ENCODE measurements at regions of chr3 and their contacts with region 1.

Region 1: DNA sequence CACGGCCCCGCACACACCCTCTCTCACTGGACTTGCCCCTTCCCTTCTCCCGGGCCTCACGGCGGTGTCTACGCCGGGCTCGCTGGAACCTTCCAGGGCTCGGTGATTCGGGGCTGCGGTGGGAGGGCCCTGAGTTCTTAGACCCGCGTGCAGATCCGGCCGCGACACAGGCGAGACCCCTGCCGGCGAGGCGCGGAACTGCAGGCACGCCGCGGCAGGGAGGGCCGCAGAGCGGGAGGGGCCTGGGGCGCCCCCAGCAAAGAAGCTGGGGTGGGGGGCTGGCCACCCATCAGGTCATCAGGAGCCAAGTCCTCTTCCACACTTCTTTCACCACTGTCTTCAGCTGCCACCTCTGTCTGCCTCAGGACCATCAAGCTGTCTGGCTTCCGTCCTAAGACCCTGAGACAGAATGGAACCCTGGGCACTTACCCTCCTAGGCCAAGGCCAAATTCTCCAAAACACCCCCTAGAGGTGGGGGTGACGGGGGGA is 164.5 kb downstream of the XXYLT1 start:
- DNase-seq: peak; percentile 85
- ATAC-seq: peak; percentile 98
- H3K4me3 ChIP-seq: peak overlapping the region in 3 of 5 experiments; percentile 13 to 40 (median 21)
- H3K4me3 Mint-ChIP-seq: peak overlapping the region; percentile 80
- H3K27ac ChIP-seq: no peak overlapping the region
- H3K27ac Mint-ChIP-seq: peak overlapping the region; percentile 79
- H3K4me1 ChIP-seq: peaks cover 15 to 24% of the 10 kb centered on the region in 2 donors
- H3K4me1 Mint-ChIP-seq: peaks cover 34% of the 10 kb centered on the region
- H3K27me3 ChIP-seq: no peaks in the 10 kb centered on the region
- H3K27me3 Mint-ChIP-seq: no peaks in the 10 kb centered on the region
- CTCF ChIP-seq: peak; percentile 97

Region 2: DNA sequence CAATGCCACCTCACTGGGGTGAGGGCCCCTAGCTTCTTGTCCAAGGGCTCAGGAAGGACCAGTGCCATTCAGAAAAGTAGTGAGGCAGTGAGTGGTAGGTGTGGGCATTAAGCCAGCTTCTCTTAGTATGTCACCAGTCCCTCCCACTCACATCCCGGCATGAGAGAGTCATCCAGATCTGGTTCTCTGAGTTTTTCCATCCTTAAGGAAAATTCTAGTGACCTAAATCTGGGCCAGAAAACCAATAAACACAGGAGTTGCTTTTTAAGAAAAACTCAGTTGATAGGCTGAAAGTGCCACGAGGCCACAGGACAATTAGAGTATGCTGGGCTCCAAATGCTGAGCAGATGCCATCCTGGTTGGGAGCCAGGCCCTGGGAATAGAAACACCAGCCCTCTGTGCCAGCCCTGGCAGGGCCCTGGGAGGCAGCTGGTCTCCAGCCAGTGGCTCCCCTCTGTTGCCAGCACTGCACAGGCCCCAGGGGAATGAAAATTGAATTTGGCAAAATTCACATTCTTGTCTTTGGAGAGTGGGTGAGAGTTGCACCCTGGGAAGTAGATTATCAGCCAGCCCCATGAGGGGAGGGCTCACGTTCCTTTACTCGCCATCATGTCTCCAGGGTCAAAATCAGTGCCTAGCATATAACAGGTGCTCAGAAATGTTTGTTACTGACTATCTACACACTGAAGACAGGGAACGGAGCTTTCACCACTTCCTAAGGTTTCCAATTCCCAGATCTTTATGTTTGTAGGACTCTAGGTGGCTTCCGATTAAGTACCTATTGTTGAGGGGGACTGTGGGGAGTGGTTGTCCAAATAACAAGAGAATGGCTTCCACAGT is 368.0 kb before region 1 on chr3:
- CTCF ChIA-PET with region 1: no interaction called
- POLR2A ChIA-PET with region 1: no interaction called
- intact Hi-C with region 1: loop called (anchors 5 kb)
- DNase-seq: no peak
- ATAC-seq: no peak
- H3K4me3 ChIP-seq: no peak overlapping the region
- H3K4me3 Mint-ChIP-seq: no peak overlapping the region
- H3K27ac ChIP-seq: no peak overlapping the region
- H3K27ac Mint-ChIP-seq: peak overlapping the region; percentile 27
- H3K4me1 ChIP-seq: peaks cover 25 to 35% of the 10 kb centered on the region in 2 donors
- H3K4me1 Mint-ChIP-seq: peaks cover 28% of the 10 kb centered on the region
- H3K27me3 ChIP-seq: no peaks in the 10 kb centered on the region
- H3K27me3 Mint-ChIP-seq: no peaks in the 10 kb centered on the region
- CTCF ChIP-seq: no peak

Region 3: DNA sequence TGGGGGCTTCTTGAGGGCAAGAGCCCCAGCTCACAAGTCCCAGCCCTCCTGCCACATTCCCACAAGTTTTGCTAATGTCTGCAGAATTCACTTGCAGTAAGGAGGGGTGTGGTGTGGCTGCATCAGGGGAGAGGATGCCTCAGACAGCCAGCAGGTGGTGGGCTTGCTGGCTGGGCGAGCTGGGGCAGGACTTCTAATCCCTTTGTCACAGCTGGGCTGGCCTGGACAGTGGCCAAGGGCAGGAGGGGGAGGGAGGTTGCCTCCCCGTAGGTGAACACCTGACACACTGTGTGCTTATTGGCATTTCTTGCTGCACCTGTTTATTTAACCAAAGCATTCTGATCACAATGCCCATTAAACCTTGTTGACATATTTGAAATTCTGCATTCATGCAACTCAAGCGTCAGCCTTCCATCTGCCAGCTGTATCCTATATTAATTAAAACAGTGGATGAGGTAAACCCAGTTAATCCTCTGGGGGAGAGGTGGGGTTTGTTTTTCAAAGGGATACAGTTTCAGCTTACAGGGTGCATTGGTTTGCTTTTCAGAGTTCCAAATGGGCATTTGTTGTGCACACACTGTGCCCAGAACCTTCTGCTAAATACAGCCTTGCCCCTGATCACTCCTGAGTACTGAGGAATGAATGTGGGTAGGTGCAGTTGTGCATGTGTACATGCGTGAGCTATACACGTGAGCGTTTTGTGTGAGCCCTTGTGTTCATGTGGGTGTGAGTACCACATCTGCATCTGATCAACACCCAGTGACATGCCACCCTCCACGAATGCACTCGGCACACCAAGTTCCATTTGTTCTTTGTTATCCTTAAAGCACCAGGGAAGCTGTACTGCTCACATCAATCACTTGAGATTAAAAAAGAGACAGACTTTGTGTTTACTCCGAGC is 104.3 kb before region 1 on chr3:
- CTCF ChIA-PET with region 1: interaction called, 61 read pairs
- POLR2A ChIA-PET with region 1: no interaction called
- intact Hi-C with region 1: loop called (anchors 1 kb)
- DNase-seq: peak; percentile 64
- ATAC-seq: peak; percentile 85
- H3K4me3 ChIP-seq: no peak overlapping the region
- H3K4me3 Mint-ChIP-seq: no peak overlapping the region
- H3K27ac ChIP-seq: no peak overlapping the region
- H3K27ac Mint-ChIP-seq: no peak overlapping the region
- H3K4me1 ChIP-seq: peaks cover 15 to 30% of the 10 kb centered on the region in 2 donors
- H3K4me1 Mint-ChIP-seq: peaks cover 31% of the 10 kb centered on the region
- H3K27me3 ChIP-seq: no peaks in the 10 kb centered on the region
- H3K27me3 Mint-ChIP-seq: no peaks in the 10 kb centered on the region
- CTCF ChIP-seq: peak; percentile 66

Region 4: DNA sequence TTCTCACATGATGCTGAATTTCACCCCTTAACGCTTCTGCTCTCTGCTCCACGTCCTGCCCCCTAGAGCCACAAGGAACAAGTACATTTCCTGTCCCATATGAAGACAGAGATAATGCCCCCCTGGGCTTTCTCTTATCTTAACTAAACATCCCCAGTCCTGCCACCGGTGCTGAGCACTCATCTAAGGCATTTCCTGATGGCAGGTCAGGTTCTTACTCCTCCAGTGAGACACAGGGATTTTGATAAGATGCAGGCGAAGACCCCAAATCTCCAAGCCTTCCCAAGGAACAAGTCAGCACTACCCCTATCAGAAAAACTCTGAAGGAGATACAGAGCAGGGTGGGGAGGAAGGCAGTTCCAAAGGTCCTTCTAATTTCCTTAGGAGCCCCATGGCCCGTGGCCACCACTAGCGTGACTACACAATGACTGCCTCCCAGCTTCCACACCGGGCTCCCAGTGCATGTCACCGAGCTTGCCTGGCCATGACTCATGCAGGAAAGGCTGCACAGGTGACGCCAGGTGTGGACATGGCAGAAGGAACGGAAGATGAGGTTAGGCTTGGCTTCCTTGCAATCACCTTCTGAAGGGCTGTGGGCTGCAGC is 11.6 kb after region 1 on chr3:
- CTCF ChIA-PET with region 1: interaction called, 15 read pairs
- POLR2A ChIA-PET with region 1: no interaction called
- intact Hi-C with region 1: no loop called
- DNase-seq: no peak
- ATAC-seq: peak; percentile 56
- H3K4me3 ChIP-seq: no peak overlapping the region
- H3K4me3 Mint-ChIP-seq: no peak overlapping the region
- H3K27ac ChIP-seq: no peak overlapping the region
- H3K27ac Mint-ChIP-seq: no peak overlapping the region
- H3K4me1 ChIP-seq: peaks cover 0 to 10% of the 10 kb centered on the region in 2 donors
- H3K4me1 Mint-ChIP-seq: peaks cover 9% of the 10 kb centered on the region
- H3K27me3 ChIP-seq: no peaks in the 10 kb centered on the region
- H3K27me3 Mint-ChIP-seq: no peaks in the 10 kb centered on the region
- CTCF ChIP-seq: peak; percentile 15

Region 5: DNA sequence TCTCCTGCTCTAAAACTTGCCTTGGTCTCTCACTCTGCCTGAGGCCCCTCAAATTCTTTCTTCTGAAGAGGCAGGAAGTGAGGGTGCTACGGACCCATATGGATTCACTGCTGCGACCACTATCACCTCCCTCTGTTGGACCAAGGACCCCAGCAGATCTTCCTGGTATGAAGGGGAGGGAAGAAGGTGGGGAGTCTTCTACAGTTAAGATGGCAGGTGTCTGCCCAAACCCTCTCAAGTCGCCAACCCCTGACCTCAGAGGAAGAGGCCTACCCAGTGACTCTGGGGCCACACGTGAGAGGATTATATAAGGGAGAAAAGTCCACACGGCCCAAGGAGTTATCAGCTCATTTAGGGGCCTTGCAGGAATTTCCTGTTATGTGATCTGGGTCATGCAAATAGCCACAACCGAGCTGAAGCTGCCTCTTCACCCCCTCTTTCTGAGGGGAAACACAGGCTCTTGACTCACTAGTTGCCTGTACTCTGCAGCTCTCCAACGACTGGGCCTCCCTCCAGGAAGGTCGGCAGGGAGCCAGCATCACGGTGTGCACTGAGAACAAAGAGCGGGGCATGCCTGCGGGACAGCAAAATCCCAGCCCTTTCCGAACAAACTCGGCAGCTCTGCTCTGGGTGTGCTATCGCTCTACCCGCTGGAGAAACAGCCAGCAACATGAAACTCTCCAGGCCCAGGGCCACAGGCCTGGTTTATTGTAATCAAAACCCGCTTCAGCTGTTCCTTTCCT is 48.5 kb after region 1 on chr3:
- CTCF ChIA-PET with region 1: interaction called, 3 read pairs
- POLR2A ChIA-PET with region 1: interaction called, 11 read pairs
- intact Hi-C with region 1: no loop called
- DNase-seq: peak; percentile 66
- ATAC-seq: peak; percentile 45
- H3K4me3 ChIP-seq: peak overlapping the region in 1 of 5 experiments; percentile 35
- H3K4me3 Mint-ChIP-seq: peak overlapping the region; percentile 78
- H3K27ac ChIP-seq: peak overlapping the region; percentile 31 to 55
- H3K27ac Mint-ChIP-seq: peak overlapping the region; percentile 94
- H3K4me1 ChIP-seq: peaks cover 66 to 83% of the 10 kb centered on the region in 2 donors
- H3K4me1 Mint-ChIP-seq: peaks cover 91% of the 10 kb centered on the region
- H3K27me3 ChIP-seq: no peaks in the 10 kb centered on the region
- H3K27me3 Mint-ChIP-seq: no peaks in the 10 kb centered on the region
- CTCF ChIP-seq: no peak

Measured in B cell (primary cell).